ENCODE measurements at regions of chr1 and their contacts with region 1.

Region 1: DNA sequence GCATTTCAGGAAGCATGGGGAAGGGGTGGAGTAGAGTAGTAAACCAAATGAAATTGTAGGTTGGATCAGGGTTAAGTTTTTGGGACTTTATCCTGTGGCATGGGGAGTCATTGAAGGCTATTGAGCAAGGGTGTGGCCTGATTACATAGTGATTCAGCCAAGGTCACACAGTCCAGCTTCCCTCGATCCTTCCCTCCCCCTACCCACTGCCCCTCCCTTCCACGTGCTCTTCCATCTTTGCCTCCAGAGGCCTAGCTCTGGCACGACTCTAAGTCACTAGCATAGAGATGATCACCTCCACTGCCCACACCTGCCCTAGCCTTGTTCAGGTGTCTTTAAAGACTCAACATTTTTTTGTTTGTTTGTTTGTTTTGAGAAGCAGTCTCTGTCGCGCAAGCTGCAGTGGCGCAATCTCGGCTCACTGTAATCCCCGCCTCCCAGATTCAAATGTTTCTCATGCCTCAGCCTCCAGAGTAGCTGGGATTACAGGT is 37.2 kb upstream of the SLC9A1 start:
- DNase-seq: no peak
- H3K4me3 ChIP-seq: no peak overlapping the region
- H3K27ac ChIP-seq: no peak overlapping the region
- H3K4me1 ChIP-seq: no peaks in the 10 kb centered on the region
- H3K27me3 ChIP-seq: no peaks in the 10 kb centered on the region
- CTCF ChIP-seq: no peak
- POLR2A ChIP-seq: no peak

Region 2: DNA sequence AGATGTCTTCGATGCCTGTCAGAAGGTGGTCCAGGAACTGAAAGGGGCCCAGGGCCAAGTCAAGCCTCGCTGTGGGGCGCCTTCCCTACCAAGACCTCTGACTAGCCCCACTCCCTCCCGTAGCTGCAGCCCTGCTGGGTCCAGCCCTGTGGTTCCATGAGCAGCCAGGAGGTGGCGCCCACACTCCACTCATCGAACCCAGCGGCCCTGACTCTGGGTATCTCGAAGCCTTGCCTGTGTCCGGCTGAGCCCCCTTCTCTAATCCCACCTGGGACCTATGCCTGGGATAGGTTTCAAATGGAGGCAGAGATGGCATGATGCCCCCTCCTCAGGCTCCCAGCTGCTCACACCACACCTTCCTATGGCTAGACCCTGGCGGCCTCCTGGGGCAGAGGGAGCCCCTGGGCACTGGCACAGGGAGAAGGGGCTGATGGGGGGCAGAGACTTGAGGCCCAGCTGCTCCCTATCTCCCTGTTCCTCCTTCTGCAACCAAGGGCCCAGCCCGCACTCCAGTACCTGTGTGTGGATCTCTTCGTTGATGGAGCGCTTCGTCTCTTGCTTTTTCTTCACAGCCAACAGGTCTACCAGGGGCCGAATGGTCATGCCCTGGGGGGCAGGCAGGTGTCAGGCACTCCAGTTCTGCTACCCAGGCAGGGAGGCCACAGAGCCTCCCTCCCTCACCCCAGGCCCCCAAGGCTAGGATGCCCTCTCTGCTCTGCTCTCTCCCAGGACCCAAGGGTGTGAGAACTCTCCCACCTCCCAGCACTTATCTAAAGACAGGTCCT is 89.2 kb before region 1 on chr1:
- CTCF ChIA-PET with region 1: interaction called, 46 read pairs
- POLR2A ChIA-PET with region 1: no interaction called
- dilution Hi-C with region 1: no loop called
- intact Hi-C with region 1: no loop called
- DNase-seq: peak; percentile 60
- H3K4me3 ChIP-seq: no peak overlapping the region
- H3K27ac ChIP-seq: no peak overlapping the region
- H3K4me1 ChIP-seq: no peaks in the 10 kb centered on the region
- H3K27me3 ChIP-seq: no peaks in the 10 kb centered on the region
- CTCF ChIP-seq: peak; percentile 93 to 98
- POLR2A ChIP-seq: no peak

Region 3: DNA sequence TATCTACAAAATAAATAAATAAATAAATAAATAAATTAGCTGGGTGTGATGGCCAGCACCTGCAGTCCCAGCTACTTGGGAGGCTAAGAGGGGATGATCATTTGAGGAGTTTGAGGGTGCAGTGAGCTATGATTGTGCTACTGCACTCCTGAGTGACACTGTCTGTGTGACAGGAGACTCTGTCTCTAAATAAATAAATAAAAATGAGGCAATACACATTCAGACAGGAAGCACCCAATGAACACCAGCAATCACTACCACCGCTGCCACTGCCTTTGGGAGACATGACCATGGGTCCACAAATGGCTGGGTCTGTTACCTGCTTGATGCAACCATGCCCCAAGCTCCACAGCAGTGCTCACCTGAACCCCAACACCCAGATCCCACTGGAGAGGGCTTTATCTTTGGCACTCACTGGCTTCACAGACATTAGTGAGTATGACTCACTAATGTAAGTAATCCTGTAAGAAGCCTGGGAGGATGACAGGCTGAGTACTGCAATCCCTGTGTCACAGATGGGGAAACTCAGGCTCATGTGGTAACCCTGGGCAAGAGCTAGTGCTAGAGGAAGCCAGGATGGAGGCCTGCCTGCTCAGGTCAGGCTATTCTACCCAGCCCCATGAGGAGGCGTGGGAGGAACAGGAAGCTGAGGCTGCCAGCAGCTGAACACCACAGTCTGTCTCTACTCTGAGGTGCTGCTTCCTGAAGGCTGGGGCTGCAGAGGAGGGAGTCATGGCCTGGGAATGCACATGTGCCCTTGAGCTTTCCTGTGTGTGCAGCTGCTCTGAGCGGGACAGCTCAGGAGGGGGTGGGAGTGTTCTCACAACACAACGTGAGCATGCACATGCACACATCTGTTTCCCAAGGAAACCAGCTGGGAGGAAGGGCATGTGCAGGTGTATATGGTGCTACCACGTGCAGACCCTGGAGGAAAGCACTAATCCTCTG is 80.2 kb before region 1 on chr1:
- CTCF ChIA-PET with region 1: interaction called, 13 read pairs
- POLR2A ChIA-PET with region 1: no interaction called
- dilution Hi-C with region 1: no loop called
- intact Hi-C with region 1: no loop called
- DNase-seq: peak; percentile 99
- H3K4me3 ChIP-seq: no peak overlapping the region
- H3K27ac ChIP-seq: peak overlapping the region; percentile 78
- H3K4me1 ChIP-seq: peaks cover 34% of the 10 kb centered on the region
- H3K27me3 ChIP-seq: no peaks in the 10 kb centered on the region
- CTCF ChIP-seq: peak; percentile 29 to 33
- POLR2A ChIP-seq: no peak

Region 4: GRCh38 chr1:27225621-27226020 is 33.5 kb after region 1 on chr1:
- CTCF ChIA-PET with region 1: interaction called, 10 read pairs
- POLR2A ChIA-PET with region 1: no interaction called
- dilution Hi-C with region 1: no loop called
- intact Hi-C with region 1: no loop called
- DNase-seq: no peak
- H3K4me3 ChIP-seq: no peak overlapping the region
- H3K27ac ChIP-seq: no peak overlapping the region
- H3K4me1 ChIP-seq: no peaks in the 10 kb centered on the region
- H3K27me3 ChIP-seq: peaks cover 2% of the 10 kb centered on the region in 2 experiments
- CTCF ChIP-seq: no peak
- POLR2A ChIP-seq: no peak

Region 5: DNA sequence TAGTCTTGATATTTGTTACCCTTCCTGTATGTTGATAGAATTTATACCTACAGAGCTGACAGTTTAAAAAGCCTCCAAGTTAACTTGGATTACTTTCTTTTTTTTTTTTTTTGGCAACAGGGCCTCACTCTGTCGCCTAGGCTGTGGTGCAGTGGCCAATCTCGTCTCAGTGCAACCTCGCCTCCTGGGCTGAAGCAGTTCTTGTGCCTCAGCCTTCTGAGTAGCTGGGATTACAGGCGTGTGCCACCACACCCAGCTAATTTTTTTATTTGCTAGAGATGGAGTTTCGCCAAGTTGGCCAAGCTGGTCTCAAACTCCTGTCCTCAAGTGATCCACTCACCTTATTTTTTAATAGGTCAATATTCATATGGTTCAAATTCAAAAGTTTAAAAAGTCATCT is 75.1 kb after region 1 on chr1:
- CTCF ChIA-PET with region 1: interaction called, 10 read pairs
- POLR2A ChIA-PET with region 1: no interaction called
- dilution Hi-C with region 1: no loop called
- intact Hi-C with region 1: no loop called
- DNase-seq: no peak
- H3K4me3 ChIP-seq: no peak overlapping the region
- H3K27ac ChIP-seq: no peak overlapping the region
- H3K4me1 ChIP-seq: no peaks in the 10 kb centered on the region
- H3K27me3 ChIP-seq: no peaks in the 10 kb centered on the region
- CTCF ChIP-seq: no peak
- POLR2A ChIP-seq: no peak

Region 6: GRCh38 chr1:27284425-27285273 is 92.6 kb after region 1 on chr1:
- CTCF ChIA-PET with region 1: interaction called, 34 read pairs
- POLR2A ChIA-PET with region 1: no interaction called
- dilution Hi-C with region 1: no loop called
- intact Hi-C with region 1: no loop called
- DNase-seq: peak; percentile 74
- H3K4me3 ChIP-seq: no peak overlapping the region
- H3K27ac ChIP-seq: no peak overlapping the region
- H3K4me1 ChIP-seq: no peaks in the 10 kb centered on the region
- H3K27me3 ChIP-seq: no peaks in the 10 kb centered on the region
- CTCF ChIP-seq: peak; percentile 76 to 85
- POLR2A ChIP-seq: no peak